ENCODE measurements at regions of chr15 and their contacts with region 1.

Region 1: DNA sequence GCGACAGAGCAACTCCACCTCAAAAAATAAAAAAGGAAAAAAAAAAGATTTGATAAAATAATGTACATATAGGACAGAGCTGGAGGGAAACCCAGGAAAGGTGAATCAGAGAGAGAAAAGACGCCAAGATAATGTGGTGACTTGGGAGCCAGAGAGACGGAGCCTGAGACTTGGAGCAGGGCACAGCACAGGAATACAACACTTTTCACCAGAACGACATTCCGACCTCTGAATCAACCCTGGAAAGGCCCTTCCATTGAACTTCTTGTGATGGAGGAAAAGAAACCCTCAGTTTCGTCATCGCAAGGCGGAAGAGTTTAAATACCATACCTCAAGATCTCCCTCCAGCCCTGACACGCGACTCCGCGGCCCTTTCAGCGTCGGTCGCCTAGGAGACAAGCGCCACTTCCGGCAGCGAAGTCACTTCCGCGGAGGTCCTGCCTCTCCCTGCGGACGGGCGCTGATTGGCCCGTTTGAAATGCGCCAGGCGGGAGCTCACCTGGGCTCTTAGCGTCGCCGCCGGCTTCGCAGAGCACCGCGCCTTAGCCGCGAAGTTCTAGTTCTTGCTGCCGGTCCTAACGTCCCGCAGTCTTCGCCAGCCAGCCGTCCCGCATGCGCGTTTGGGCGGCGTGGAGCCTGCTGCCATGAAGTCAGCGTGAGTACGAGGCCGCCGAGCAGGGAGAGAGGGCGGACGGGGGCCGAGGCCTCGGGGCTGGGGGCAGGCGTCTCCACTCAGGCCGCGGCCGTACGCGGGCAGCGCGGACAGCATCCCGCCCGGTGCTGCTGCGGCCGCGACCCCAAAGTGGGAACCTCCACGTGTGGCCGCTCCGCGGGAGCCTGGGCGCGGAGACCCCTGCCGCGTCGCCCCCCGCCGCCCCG is at the start of gene KIF23:
- DNase-seq: peak; percentile 95
- H3K4me3 Mint-ChIP-seq: peak within 1 kb of the TSS; percentile 84
- H3K27ac Mint-ChIP-seq: peak within 1 kb of the TSS; percentile 19
- H3K4me1 Mint-ChIP-seq: peaks cover 11% of the 10 kb centered on the region
- H3K27me3 Mint-ChIP-seq: peaks cover 18% of the 10 kb centered on the region
- total RNA-seq, gene KIF23: 68.8 to 73.1 TPM

Region 2: GRCh38 chr15:68924866-68925560 is 489.0 kb before region 1 on chr15:
- CTCF ChIA-PET with region 1: no interaction called
- intact Hi-C with region 1: no loop called
- DNase-seq: peak; percentile 85
- H3K4me3 Mint-ChIP-seq: no peak overlapping the region
- H3K27ac Mint-ChIP-seq: no peak overlapping the region
- H3K4me1 Mint-ChIP-seq: no peaks in the 10 kb centered on the region
- H3K27me3 Mint-ChIP-seq: peaks cover 24% of the 10 kb centered on the region

Region 3: DNA sequence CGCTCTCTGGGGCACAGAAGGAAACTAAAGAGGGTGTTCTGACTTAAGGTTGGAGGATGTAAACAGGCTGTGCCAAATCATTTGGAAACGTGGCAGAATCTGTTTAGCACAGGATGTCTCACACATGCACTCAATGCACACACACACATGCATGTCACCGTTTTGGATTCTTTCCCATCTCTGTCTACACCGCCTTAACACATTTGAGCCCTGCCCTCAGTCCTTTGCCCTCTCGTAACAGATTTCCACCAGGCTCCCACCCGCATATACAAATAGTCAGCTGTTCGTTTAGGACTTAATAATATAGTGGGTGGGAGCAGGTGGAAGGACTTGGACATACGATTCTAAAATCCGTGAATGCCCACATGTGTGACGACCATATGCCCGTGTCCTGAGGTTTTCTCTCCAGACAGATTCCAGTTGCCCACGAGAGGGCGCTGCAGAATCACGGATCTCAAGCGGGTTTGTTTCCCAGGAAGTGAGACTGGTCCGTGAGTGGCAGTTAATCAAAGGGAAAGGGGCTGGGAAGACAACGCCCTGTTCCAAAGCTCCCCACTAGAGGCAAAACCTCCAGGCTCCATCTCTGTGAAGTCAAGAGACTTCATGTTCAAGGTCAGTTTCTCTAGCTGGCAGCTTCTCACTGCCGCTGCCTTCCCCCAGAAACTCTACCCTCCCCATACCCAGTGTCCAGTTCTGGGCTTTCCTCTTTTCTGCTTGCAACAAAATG is 355.1 kb before region 1 on chr15:
- CTCF ChIA-PET with region 1: no interaction called
- intact Hi-C with region 1: loop called (anchors 1 kb)
- DNase-seq: peak; percentile 86
- H3K4me3 Mint-ChIP-seq: no peak overlapping the region
- H3K27ac Mint-ChIP-seq: no peak overlapping the region
- H3K4me1 Mint-ChIP-seq: peaks cover 22% of the 10 kb centered on the region
- H3K27me3 Mint-ChIP-seq: peaks cover 4% of the 10 kb centered on the region

Region 4: DNA sequence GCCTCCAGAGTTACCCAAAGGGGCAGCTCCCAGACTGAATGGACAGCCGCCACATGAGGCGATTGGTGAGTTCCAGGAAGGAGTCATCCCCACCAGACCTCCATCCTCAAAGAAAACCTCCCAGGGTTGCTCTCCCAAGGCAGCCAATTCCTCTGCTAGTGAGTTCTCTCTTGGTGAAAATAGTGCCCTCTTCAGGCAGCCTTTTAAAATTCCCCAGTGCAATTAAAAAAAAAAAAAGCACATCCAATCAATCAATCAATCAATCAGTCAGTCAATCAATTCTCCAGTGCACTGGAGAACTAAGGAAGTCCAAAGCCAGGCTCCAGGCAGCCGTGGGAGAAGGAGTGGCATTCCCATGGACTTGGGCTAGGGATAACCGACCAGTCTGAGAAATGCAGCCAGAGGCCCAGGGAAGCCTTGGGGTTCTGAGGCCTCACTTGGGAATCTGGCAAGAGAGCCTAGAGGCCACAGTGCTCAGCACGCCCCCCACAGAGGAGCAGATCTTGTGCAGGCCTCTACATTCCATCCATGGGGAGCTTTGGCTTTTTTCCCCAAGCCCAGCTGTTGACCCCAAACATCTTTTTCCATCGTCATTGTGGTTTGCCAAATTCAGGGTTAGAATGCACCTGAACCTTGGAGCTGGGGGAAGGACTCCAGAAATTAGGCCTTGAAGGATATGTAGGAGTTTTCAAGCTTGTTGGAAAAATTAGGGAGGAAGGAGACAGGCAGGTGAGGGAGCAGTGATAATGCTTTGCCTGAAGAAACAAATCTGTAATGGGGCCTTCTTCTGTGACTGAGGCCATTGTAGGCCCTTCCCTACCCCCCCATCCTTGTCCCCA is 110.5 kb before region 1 on chr15:
- CTCF ChIA-PET with region 1: no interaction called
- intact Hi-C with region 1: loop called (anchors 5 kb)
- DNase-seq: no peak
- H3K4me3 Mint-ChIP-seq: no peak overlapping the region
- H3K27ac Mint-ChIP-seq: no peak overlapping the region
- H3K4me1 Mint-ChIP-seq: peaks cover under 1% of the 10 kb centered on the region
- H3K27me3 Mint-ChIP-seq: peaks cover 36% of the 10 kb centered on the region

Region 5: DNA sequence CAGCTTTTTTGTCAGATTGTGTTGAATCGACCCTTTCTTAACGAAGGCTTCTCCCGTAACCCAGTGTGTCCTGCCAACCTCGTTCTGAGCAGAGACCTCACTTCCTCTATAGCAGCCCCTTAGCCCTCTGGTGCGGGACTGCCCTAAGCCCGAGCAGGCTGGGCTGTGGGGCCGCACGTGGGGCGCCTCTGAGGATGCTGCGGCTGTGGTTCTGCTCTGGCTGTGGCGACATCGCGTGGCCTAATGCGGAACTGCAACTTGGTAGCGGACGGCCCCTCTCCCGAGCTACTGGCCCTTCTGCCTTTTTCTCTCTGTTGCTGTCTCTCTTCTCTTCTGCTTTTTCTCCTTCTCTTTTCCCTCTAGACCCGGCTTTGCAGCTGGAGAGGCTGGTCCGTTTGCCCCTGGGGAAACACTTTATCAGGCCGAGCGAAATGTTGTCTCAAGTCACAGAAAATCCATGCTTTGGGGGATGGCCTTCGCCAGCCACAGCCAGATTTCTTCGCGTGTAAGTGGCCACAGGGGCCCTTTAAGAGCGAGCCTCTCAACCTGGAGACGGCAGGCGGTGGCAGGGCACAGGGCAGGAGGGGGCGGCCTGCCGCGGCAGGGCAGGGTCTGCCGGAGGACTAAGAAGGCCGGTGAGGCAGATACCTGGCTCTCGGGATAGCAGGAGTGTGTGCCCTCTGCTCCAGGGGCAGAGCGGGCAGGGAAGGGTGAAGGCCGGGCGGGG is 19.3 kb before region 1 on chr15:
- CTCF ChIA-PET with region 1: interaction called, 22 read pairs
- intact Hi-C with region 1: no loop called
- DNase-seq: peak; percentile 88
- H3K4me3 Mint-ChIP-seq: no peak overlapping the region
- H3K27ac Mint-ChIP-seq: no peak overlapping the region
- H3K4me1 Mint-ChIP-seq: peaks cover 4% of the 10 kb centered on the region
- H3K27me3 Mint-ChIP-seq: peaks cover 3% of the 10 kb centered on the region

Region 6: DNA sequence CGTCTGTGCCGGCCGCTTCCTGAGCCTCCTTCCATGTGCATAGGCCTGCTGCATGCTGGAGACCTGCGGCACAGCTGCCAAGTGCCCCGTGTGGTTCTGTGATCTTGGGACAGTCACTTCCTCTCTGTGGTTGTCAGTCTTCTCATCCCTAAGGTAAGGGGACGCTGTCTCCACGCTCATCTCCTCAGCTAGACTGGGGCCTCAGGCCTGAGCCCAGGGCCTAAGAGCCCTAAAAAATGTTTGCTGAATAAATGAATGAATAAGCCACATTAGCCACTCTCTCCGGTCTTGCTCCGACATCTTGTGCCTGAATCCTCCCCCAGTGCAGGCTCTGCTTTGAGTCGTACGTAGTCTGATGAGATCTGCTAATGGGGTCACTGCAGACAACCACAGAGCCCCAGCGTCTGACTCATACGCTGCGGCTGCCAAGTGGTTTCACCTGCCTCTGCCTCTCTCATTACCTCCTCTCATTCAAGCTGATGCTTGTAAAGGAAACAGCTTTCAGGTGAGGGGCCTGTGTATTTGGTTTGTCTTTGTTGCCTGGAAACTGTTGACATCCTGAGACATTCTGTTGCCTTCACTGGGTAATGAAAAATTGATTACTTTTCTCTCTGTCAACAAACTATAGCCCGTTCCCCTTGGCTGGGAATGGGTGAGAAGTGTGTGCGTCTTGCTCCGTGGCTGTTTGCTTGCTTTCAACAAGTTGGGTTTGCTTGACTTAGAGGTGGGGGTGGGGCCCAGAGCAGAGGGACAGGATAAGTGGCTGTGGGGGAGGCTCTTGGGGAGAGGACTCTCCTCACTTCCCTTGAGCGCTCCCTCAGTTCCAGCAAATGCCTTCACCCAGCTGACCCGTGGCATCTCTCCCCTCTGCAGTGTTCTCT is 54.4 kb after region 1 on chr15:
- CTCF ChIA-PET with region 1: interaction called, 6 read pairs
- intact Hi-C with region 1: loop called (anchors 1 kb)
- DNase-seq: peak; percentile 89
- H3K4me3 Mint-ChIP-seq: peak overlapping the region; percentile 25
- H3K27ac Mint-ChIP-seq: peak overlapping the region; percentile 75
- H3K4me1 Mint-ChIP-seq: peaks cover 27% of the 10 kb centered on the region
- H3K27me3 Mint-ChIP-seq: no peaks in the 10 kb centered on the region

Region 7: DNA sequence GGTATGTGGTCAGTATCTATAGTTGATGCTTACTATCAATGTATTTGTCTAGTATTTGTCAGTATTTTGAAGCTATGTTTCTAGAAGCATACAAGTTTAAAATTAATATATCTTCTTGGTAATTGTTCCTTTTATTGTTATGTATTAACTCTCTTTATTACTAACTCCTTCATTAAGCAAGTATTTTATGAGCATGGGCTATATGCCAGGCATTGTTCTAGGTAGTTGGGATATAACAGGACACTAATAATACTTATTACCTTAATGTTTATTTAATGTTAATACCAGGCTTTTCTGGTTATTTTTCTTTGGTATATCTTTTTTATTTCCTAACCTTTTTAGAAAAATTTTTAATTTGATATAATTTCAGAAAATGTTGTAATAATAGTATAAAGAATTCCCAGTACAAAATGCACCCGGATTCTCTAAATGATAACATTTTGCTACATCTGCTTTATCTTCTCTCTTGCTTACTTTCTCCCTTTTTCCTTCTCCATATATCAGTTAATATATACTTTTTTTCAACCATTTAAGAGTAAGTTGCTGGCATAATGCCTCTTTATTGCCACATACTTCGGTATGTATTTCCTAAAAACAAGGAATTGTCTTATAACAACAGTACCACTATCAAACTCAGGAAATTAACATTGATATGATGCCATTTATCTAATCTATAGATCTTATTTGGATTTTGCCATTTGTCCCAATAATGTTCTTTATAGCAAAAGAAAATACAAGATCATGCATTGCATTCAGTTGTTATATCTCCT is 1509.4 kb after region 1 on chr15:
- CTCF ChIA-PET with region 1: no interaction called
- intact Hi-C with region 1: no loop called
- DNase-seq: no peak
- H3K4me3 Mint-ChIP-seq: no peak overlapping the region
- H3K27ac Mint-ChIP-seq: no peak overlapping the region
- H3K4me1 Mint-ChIP-seq: no peaks in the 10 kb centered on the region
- H3K27me3 Mint-ChIP-seq: peaks cover 21% of the 10 kb centered on the region

Measured in activated naive CD4-positive, alpha-beta T cell treated with anti-CD3 and anti-CD28 coated beads for 36 hours (primary cell).